ENCODE measurements at regions of chr11 and their contacts with region 1.

Region 1: DNA sequence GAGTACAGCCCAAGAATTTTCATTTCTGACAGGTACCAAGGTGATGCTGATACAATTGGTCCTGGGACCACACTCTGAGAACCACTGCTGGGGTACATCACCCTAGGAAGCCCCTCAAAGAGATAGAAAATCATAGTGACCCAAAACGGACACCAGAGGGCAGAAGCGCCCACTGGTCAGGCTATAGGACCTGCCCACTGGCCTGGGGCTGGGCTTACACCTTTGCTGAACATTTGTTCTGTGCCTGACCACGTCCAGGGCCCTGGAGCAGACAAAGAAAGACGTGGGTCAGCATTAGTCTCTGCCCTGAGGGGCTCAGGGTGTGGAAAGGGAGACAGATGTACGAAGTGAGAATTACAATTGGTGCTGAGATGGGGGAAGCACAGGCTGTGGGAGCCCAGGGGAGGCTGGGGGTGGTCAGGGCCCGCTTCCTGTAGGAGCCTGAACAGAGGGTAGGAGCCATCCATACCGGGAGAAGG is 14.4 kb upstream of the SERPINH1 start:
- DNase-seq: peak; percentile 65 to 80 (median 74)
- ATAC-seq: peak; percentile 74 to 89 (median 86)
- H3K4me3 ChIP-seq: no peak overlapping the region
- H3K27ac ChIP-seq: peak overlapping the region in 2 of 12 donors; percentile 26 to 33
- H3K4me1 ChIP-seq: peaks cover 0 to 8% (median 5%) of the 10 kb centered on the region in 12 donors
- H3K27me3 ChIP-seq: no peaks in the 10 kb centered on the region
- CTCF ChIP-seq: peak; percentile 77 to 96 (median 90)
- POLR2A ChIP-seq: no peak

Region 2: GRCh38 chr11:75577207-75577606 is 29.6 kb after region 1 on chr11:
- intact Hi-C with region 1: loop called (anchors 1 to 2 kb)
- DNase-seq: peak in 2 of 5 donors; percentile 57 to 74
- ATAC-seq: no peak
- H3K4me3 ChIP-seq: no peak overlapping the region
- H3K27ac ChIP-seq: peak overlapping the region in 2 of 12 donors; percentile 2 to 53
- H3K4me1 ChIP-seq: peaks cover 0 to 27% (median 15%) of the 10 kb centered on the region in 12 donors
- H3K27me3 ChIP-seq: no peaks in the 10 kb centered on the region
- CTCF ChIP-seq: peak; percentile 49 to 75 (median 62)
- POLR2A ChIP-seq: no peak

Region 3: GRCh38 chr11:75678620-75679259 is 131.1 kb after region 1 on chr11:
- intact Hi-C with region 1: no loop called
- DNase-seq: no peak
- ATAC-seq: peak in 1 of 4 donors; percentile 29
- H3K4me3 ChIP-seq: no peak overlapping the region
- H3K27ac ChIP-seq: no peak overlapping the region
- H3K4me1 ChIP-seq: no peaks in the 10 kb centered on the region
- H3K27me3 ChIP-seq: peaks cover 0 to 13% (median 0%) of the 10 kb centered on the region in 9 donors
- CTCF ChIP-seq: no peak
- POLR2A ChIP-seq: no peak

Region 4: DNA sequence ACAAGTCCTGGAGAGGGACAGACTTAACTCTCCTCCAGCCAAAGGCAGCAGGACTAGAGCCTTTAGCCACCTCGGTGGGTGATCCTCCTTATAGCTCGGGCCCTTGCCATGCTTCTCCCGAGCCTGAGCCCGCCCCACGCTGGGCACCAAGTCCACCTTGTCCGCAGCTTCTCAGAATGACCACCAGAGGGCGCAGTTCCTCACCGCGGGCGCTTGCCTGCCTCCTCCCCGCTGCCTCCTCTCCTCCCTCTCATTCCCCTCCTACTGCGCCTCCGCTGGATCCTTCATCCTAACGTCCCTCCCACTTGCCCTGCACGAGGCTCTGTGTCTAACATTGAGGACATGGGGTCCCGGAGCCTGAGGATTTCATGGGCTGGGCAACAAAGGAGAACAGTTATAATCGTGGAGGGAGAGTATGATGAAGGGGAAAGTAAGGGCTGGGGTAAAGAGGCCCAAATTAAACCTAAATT is 158.7 kb after region 1 on chr11:
- intact Hi-C with region 1: loop called in 6 of 10 experiments (anchors 1 to 10 kb)
- DNase-seq: peak; percentile 66 to 81 (median 76)
- ATAC-seq: peak; percentile 80 to 98 (median 93)
- H3K4me3 ChIP-seq: no peak overlapping the region
- H3K27ac ChIP-seq: no peak overlapping the region
- H3K4me1 ChIP-seq: peaks cover 0 to 8% (median 4%) of the 10 kb centered on the region in 12 donors
- H3K27me3 ChIP-seq: no peaks in the 10 kb centered on the region
- CTCF ChIP-seq: peak; percentile 91 to 98 (median 96)
- POLR2A ChIP-seq: no peak

Region 5: DNA sequence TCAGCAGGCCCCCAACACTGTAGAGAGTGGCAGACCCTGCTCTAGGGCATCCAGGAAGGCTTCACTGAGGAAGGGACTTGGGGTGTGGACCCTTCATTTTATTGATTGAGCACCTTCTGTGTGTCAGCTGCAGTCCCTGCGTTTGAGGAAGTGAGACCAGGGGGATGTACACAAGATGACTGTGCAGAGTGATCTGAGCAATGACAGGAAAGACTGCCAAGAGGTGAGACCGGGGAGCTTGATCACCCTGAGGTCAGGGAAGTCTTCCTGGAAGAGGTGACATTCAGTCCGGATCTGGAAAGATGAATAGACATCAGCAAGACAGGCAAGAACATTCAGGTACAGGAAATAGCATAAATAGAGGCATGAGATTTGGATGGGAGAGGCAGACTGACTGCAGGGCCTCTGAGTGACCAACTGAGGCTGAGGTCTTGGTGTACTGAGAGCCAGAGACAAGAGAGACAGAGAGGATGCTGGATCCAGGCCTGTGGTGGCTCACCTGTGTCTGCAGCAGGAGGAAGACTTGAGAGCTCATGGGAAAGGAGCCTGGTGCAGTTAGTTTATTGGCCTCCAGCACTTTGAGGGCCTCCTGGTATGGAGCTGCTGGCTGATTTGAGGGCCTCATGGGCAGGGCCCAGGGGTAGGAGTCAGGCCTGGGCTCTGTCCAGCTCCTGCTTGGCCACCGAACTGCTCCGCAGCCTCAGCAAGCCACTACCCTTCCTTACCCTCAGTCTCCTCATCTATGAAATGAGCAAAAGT is 226.2 kb after region 1 on chr11:
- intact Hi-C with region 1: loop called in 3 of 10 experiments (anchors 5 to 10 kb)
- DNase-seq: no peak
- ATAC-seq: peak in 1 of 4 donors; percentile 32
- H3K4me3 ChIP-seq: no peak overlapping the region
- H3K27ac ChIP-seq: peak overlapping the region in 1 of 12 donors; percentile 49
- H3K4me1 ChIP-seq: peaks cover 0 to 63% (median 4%) of the 10 kb centered on the region in 12 donors
- H3K27me3 ChIP-seq: peaks cover 0 to 8% (median 2%) of the 10 kb centered on the region in 9 donors
- CTCF ChIP-seq: no peak
- POLR2A ChIP-seq: no peak

Region 6: GRCh38 chr11:76329084-76329984 is 781.7 kb after region 1 on chr11:
- intact Hi-C with region 1: loop called in 1 of 10 experiments (anchors 10 kb)
- DNase-seq: no peak
- ATAC-seq: no peak
- H3K4me3 ChIP-seq: no peak overlapping the region
- H3K27ac ChIP-seq: no peak overlapping the region
- H3K4me1 ChIP-seq: peaks cover 0 to 13% (median 0%) of the 10 kb centered on the region in 12 donors
- H3K27me3 ChIP-seq: no peaks in the 10 kb centered on the region
- CTCF ChIP-seq: no peak
- POLR2A ChIP-seq: no peak

Measured in heart left ventricle (tissue), 16 donors.